ENCODE measurements at regions of chr5 and their contacts with region 1.

Region 1: GRCh38 chr5:53362521-53362941 is 117.9 kb upstream of the FST start:
- DNase-seq: peak; percentile 92
- H3K4me3 ChIP-seq: no peak overlapping the region
- H3K27ac ChIP-seq: peak overlapping the region; percentile 82
- H3K4me1 ChIP-seq: peaks cover 12% of the 10 kb centered on the region
- H3K27me3 ChIP-seq: no peaks in the 10 kb centered on the region
- CTCF ChIP-seq: no peak
- POLR2A ChIP-seq: peak; percentile 46

Region 2: DNA sequence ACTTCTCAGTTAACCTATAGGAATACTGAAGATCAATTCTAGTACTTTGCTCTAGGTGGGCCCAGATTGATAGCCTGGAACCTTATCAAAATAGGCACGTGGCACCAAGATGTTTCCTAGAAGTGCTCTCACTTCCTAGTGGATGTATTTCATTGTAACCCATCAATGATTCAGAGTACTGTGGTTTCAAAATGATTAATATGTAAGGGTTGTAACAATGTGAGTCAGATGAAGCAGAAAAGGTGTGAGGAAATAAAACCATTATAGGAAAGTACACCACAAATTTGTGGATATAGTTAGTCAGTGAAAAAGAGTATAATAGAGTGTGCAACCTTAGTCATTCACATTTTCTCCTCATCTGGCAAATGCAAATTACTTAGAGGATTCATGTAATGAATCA is 59.4 kb before region 1 on chr5:
- CTCF ChIA-PET with region 1: no interaction called
- POLR2A ChIA-PET with region 1: no interaction called
- dilution Hi-C with region 1: no loop called
- intact Hi-C with region 1: no loop called
- DNase-seq: peak; percentile 54
- H3K4me3 ChIP-seq: no peak overlapping the region
- H3K27ac ChIP-seq: no peak overlapping the region
- H3K4me1 ChIP-seq: no peaks in the 10 kb centered on the region
- H3K27me3 ChIP-seq: no peaks in the 10 kb centered on the region
- CTCF ChIP-seq: no peak
- POLR2A ChIP-seq: no peak

Region 3: GRCh38 chr5:53418844-53419646 is 56.5 kb after region 1 on chr5:
- CTCF ChIA-PET with region 1: interaction called, 5 read pairs
- POLR2A ChIA-PET with region 1: no interaction called
- dilution Hi-C with region 1: no loop called
- intact Hi-C with region 1: loop called (anchors 1 kb)
- DNase-seq: peak; percentile 88
- H3K4me3 ChIP-seq: peak overlapping the region in 1 of 3 experiments; percentile 23
- H3K27ac ChIP-seq: peak overlapping the region; percentile 79
- H3K4me1 ChIP-seq: peaks cover 18% of the 10 kb centered on the region
- H3K27me3 ChIP-seq: no peaks in the 10 kb centered on the region
- CTCF ChIP-seq: no peak
- POLR2A ChIP-seq: no peak

Region 4: DNA sequence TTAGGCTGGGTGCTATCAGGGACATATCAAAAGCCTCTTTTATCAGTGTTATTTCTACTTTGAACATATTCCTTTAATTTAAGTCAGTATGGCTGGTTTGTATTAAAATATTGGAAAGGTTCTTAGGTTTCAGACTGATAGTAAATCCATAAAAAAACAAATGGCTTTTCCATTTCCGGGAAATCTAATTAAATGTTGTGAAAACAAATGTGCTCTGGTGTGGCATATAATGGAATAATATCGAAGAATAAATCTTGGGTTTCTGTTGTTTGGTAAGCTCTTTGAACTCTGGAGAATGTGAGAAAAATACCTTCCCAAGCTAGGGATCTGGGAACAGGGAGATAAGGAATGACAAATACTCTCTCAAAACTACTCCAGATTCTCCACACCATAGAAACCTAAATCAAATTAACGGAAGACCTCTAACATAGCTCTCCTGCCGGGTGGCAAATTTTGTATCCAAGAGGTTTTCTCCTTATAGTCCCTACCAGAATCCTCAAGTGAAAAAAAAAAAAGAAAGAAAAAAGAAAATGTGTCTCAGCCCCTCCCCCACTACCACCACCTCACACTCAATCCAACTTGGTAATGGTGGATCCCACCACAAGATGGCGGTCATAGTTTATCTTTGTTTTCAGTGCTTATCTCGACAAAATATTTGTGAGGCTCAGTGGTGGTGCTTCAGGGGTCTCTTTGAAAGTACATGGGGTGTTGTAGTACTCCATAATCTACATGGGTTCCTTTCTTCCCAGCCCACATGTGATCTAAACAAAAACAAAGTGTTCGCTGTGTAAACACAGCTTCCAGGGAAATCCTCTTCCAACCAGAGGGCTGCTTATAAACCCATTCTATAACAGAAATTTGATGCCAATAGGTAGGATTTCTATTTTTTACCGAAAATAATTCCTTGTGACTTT is 63.3 kb after region 1 on chr5:
- CTCF ChIA-PET with region 1: interaction called, 7 read pairs
- POLR2A ChIA-PET with region 1: no interaction called
- dilution Hi-C with region 1: no loop called
- intact Hi-C with region 1: loop called (anchors 1 kb)
- DNase-seq: no peak
- H3K4me3 ChIP-seq: no peak overlapping the region
- H3K27ac ChIP-seq: no peak overlapping the region
- H3K4me1 ChIP-seq: no peaks in the 10 kb centered on the region
- H3K27me3 ChIP-seq: no peaks in the 10 kb centered on the region
- CTCF ChIP-seq: peak in 1 of 2 donors; percentile 20
- POLR2A ChIP-seq: no peak